Panc1 (cell line): ENCODE measurements at regions of chr18 and their contacts with region 1.

Region 1: DNA sequence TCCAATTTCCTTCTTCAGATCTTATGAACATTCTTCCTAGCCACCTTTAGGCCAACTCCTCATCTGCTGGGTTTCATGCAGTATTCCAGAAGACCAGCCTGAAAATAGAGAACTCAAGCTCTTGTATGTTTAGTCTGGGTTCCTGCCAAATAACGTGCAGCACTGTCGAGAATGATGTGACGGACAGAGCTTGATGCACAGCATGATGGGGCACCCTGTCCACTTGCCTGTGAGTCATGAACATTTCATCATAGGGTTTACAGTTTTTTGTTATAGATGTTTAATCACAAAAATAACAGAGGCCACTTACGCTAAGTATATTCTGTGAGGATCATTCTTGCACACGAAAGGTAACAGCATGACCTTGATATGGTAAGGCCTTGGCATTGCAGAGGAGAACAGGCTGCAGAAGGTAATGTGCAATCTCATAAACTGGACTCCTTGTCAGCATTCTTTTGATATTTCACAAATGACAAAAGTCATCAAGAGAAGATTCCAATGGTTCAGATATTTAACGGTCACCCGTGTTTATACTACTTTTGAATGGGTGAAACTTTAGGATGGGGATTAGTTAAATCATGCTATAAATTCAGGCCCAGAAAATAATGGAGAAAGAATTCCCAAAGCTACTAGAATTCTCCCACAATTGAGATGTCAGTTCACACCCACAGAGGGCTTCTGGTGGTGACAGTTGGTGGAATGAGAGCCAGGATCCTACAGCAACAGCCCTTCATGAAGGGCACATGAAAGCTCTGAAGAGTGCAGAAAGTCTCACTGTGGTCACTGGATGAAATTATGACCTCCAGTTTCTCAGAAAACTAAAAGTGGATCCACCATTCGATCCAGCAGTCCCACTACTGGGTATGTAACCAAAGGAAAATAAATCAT is 396.1 kb upstream of the RAB12 start:
- DNase-seq: no peak
- ATAC-seq: no peak
- H3K4me3 ChIP-seq: no peak overlapping the region
- H3K27ac ChIP-seq: no peak overlapping the region
- H3K4me1 ChIP-seq: no peaks in the 10 kb centered on the region
- H3K27me3 ChIP-seq: no peaks in the 10 kb centered on the region
- CTCF ChIP-seq: no peak

Region 2: DNA sequence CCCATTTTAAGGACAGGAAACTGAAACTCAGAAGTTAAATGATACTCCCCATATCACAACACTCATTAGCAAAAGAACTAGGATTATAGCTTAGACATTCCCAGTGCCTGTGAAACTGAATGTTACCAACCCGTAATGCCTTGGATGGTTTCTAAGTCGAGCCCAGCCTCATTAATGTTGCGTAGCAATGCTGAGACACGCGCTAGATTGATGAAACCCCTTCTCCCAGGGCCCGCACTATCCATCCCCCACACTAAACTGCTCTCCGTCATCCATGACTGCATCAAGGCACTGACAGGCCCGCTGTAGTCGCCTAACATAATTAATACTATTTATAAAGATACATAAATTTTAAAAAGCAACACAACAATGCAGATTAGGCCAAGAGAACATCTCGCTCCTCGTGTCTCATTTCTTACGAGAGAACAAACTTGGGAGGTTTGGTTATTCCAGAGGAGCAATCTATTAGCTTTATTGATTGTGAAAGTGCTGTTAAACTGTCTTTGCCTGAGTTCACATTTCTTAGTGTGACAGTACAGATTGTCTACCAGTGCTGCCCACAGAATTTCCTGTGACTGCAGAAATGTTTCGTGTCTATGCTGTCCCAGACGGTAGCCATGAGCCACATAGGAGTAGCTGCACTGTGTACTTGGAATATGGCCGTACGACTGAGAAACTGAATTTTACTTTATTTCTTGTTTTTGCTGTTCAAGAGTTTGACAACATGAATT is 83.9 kb after region 1 on chr18:
- CTCF ChIA-PET with region 1: no interaction called
- POLR2A ChIA-PET with region 1: interaction called, 11 read pairs
- in situ Hi-C with region 1: no loop called
- intact Hi-C with region 1: no loop called
- DNase-seq: no peak
- ATAC-seq: no peak
- H3K4me3 ChIP-seq: no peak overlapping the region
- H3K27ac ChIP-seq: no peak overlapping the region
- H3K4me1 ChIP-seq: no peaks in the 10 kb centered on the region
- H3K27me3 ChIP-seq: no peaks in the 10 kb centered on the region
- CTCF ChIP-seq: no peak